ENCODE measurements at regions of chr4 and their contacts with region 1.

Region 1: DNA sequence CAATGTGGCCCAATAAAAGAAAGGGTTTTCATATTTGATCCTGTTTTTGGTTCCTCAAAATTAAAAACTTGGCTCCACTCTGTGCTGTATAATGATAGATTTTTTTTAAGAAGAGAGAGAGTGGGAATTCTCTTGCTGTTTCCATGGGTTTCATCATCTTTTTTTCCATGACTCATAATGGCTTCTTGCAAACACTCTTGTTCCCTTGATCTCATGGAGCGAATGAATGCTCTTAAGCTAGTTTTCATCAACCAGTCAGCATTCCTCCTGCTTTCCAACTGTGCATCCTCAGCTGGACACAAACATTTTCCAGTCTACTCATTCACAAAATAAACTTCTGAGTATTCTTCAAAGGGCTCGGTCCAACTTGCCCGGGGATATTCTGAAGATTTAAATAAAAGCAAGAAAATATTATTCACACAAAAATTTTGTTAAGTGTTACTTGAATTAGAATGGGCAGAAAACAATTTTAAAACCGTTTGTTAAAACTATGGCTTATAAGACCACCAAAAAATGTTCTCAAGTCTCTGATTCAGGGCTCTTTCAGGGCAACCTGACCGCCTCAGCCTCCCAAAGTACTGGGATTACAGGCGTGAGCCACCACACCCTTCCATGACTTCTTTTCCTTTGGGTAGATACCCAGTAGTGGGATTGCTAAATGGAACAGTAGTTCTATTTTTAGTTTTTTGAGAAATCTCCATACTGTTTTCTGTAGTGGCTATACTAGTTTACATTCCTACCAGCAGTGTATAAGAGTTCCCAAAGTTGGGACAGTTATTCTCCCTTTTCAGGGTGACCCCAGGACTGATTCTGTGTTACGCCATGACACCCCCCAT is 64.7 kb downstream of the TMEM156 start:
- DNase-seq: no peak
- H3K4me3 ChIP-seq: no peak overlapping the region
- H3K27ac ChIP-seq: no peak overlapping the region
- H3K4me1 ChIP-seq: no peaks in the 10 kb centered on the region
- CTCF ChIP-seq: no peak

Region 2: GRCh38 chr4:38983787-38984598 is 16.5 kb after region 1 on chr4:
- CTCF ChIA-PET with region 1: no interaction called
- POLR2A ChIA-PET with region 1: interaction called, 10 read pairs
- intact Hi-C with region 1: no loop called
- DNase-seq: no peak
- H3K4me3 ChIP-seq: no peak overlapping the region
- H3K27ac ChIP-seq: no peak overlapping the region
- H3K4me1 ChIP-seq: peaks cover 13% of the 10 kb centered on the region
- CTCF ChIP-seq: no peak